SK-N-SH (cell line): ENCODE measurements at regions of chr7 and their contacts with region 1.

Region 1: DNA sequence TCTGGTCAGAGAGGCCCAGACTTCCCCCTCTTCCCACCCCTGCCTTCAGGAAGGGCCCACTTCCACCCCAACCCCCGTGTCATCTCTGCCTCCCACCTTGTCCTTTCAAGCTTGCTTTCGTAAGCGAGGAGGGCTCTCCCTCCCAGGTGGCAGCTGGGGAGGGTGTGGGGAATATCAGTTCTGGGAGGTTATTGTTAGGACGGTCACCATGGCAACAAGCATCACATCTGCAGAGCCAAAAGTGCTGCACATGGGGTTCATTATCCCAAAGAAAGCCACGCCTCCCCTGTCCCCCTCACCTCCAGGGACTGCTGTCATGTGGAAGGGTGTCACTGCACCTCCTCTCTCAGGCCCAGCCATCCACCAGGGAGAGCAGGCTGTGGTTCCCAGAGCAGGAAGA is 2.6 kb upstream of the CAMK2B start:
- DNase-seq: peak; percentile 46
- H3K4me3 ChIP-seq: no peak overlapping the region
- H3K27ac ChIP-seq: no peak overlapping the region
- H3K4me1 ChIP-seq: peaks cover 0 to 16% of the 10 kb centered on the region in 2 experiments; a peak in 1 of 4 replicates
- H3K27me3 ChIP-seq: peaks cover 40% of the 10 kb centered on the region
- CTCF ChIP-seq: no peak
- EP300 ChIP-seq: no peak
- RAD21 ChIP-seq: no peak

Region 2: GRCh38 chr7:44348300-44348699 is 20.3 kb after region 1 on chr7:
- CTCF ChIA-PET with region 1: interaction called, 11 read pairs
- POLR2A ChIA-PET with region 1: no interaction called
- DNase-seq: peak; percentile 44
- H3K4me3 ChIP-seq: no peak overlapping the region
- H3K27ac ChIP-seq: no peak overlapping the region
- H3K4me1 ChIP-seq: no peaks in the 10 kb centered on the region; a peak in 1 of 4 replicates
- H3K27me3 ChIP-seq: peaks cover 10% of the 10 kb centered on the region; the same call in 1 of the 2 replicates
- CTCF ChIP-seq: peak; percentile 61
- EP300 ChIP-seq: no peak
- RAD21 ChIP-seq: peak; percentile 62